RWPE1 (cell line): ENCODE measurements at regions of chr11 and their contacts with region 1.

Region 1: GRCh38 chr11:66282468-66283386 is 4.8 kb downstream of the CNIH2 start:
- DNase-seq: peak; percentile 87
- H3K27ac ChIP-seq: peak overlapping the region; percentile 57
- CTCF ChIP-seq: peak; percentile 94

Region 2: GRCh38 chr11:66272596-66272995 is 10.1 kb before region 1 on chr11:
- CTCF ChIA-PET with region 1: interaction called, 13 read pairs
- POLR2A ChIA-PET with region 1: no interaction called
- DNase-seq: no peak
- H3K27ac ChIP-seq: peak overlapping the region; percentile 77
- CTCF ChIP-seq: no peak